CD8-positive, alpha-beta T cell (primary cell): ENCODE measurements at regions of chr3 and their contacts with region 1.

Region 1: DNA sequence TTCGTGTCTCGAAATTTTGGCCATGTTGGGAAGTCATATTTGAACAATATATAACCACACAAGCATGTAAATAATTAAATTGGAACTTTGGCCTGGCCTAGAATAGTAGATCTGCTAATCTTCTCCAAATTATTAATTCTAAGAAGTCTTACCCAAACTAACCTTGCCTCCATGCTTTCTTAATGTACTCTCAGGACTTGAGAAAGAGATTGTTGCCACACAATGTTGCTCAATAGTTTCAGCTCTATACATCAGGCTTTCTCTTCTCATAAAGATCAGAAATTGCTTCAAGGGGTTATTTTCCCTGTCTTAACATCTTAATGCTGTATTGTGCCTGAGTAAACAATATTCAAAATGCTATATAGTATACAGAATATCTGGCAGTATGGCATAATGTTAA is 202.7 kb upstream of the LRIG1 start:
- DNase-seq: no peak
- ATAC-seq: no peak
- H3K4me3 ChIP-seq: no peak overlapping the region
- H3K4me3 Mint-ChIP-seq: no peak overlapping the region
- H3K27ac ChIP-seq: no peak overlapping the region
- H3K27ac Mint-ChIP-seq: no peak overlapping the region
- H3K4me1 ChIP-seq: no peaks in the 10 kb centered on the region
- H3K4me1 Mint-ChIP-seq: no peaks in the 10 kb centered on the region
- H3K27me3 ChIP-seq: no peaks in the 10 kb centered on the region
- H3K27me3 Mint-ChIP-seq: peaks cover 4% of the 10 kb centered on the region
- CTCF ChIP-seq: no peak

Region 2: GRCh38 chr3:66722675-66723074 is 19.2 kb after region 1 on chr3:
- CTCF ChIA-PET with region 1: no interaction called
- POLR2A ChIA-PET with region 1: no interaction called
- intact Hi-C with region 1: loop called in 1 of 2 experiments (anchors 1 kb)
- DNase-seq: no peak
- ATAC-seq: no peak
- H3K4me3 ChIP-seq: no peak overlapping the region
- H3K4me3 Mint-ChIP-seq: no peak overlapping the region
- H3K27ac ChIP-seq: no peak overlapping the region
- H3K27ac Mint-ChIP-seq: no peak overlapping the region
- H3K4me1 ChIP-seq: no peaks in the 10 kb centered on the region
- H3K4me1 Mint-ChIP-seq: no peaks in the 10 kb centered on the region
- H3K27me3 ChIP-seq: no peaks in the 10 kb centered on the region
- H3K27me3 Mint-ChIP-seq: peaks cover 10% of the 10 kb centered on the region
- CTCF ChIP-seq: no peak

Region 3: GRCh38 chr3:66797889-66798560 is 94.5 kb after region 1 on chr3:
- CTCF ChIA-PET with region 1: no interaction called
- POLR2A ChIA-PET with region 1: no interaction called
- intact Hi-C with region 1: loop called in 1 of 2 experiments (anchors 10 kb)
- DNase-seq: no peak
- ATAC-seq: no peak
- H3K4me3 ChIP-seq: no peak overlapping the region
- H3K4me3 Mint-ChIP-seq: no peak overlapping the region
- H3K27ac ChIP-seq: no peak overlapping the region
- H3K27ac Mint-ChIP-seq: no peak overlapping the region
- H3K4me1 ChIP-seq: no peaks in the 10 kb centered on the region
- H3K4me1 Mint-ChIP-seq: no peaks in the 10 kb centered on the region
- H3K27me3 ChIP-seq: no peaks in the 10 kb centered on the region
- H3K27me3 Mint-ChIP-seq: peaks cover 18% of the 10 kb centered on the region
- CTCF ChIP-seq: no peak